ENCODE measurements at regions of chr2 and their contacts with region 1.

Region 1: GRCh38 chr2:43484323-43484930 is 111.4 kb downstream of the THADA start:
- DNase-seq: no peak
- ATAC-seq: peak; percentile 61
- H3K4me3 Mint-ChIP-seq: no peak overlapping the region
- H3K27ac Mint-ChIP-seq: no peak overlapping the region
- H3K4me1 Mint-ChIP-seq: peaks cover 40% of the 10 kb centered on the region
- H3K27me3 Mint-ChIP-seq: no peaks in the 10 kb centered on the region

Region 2: DNA sequence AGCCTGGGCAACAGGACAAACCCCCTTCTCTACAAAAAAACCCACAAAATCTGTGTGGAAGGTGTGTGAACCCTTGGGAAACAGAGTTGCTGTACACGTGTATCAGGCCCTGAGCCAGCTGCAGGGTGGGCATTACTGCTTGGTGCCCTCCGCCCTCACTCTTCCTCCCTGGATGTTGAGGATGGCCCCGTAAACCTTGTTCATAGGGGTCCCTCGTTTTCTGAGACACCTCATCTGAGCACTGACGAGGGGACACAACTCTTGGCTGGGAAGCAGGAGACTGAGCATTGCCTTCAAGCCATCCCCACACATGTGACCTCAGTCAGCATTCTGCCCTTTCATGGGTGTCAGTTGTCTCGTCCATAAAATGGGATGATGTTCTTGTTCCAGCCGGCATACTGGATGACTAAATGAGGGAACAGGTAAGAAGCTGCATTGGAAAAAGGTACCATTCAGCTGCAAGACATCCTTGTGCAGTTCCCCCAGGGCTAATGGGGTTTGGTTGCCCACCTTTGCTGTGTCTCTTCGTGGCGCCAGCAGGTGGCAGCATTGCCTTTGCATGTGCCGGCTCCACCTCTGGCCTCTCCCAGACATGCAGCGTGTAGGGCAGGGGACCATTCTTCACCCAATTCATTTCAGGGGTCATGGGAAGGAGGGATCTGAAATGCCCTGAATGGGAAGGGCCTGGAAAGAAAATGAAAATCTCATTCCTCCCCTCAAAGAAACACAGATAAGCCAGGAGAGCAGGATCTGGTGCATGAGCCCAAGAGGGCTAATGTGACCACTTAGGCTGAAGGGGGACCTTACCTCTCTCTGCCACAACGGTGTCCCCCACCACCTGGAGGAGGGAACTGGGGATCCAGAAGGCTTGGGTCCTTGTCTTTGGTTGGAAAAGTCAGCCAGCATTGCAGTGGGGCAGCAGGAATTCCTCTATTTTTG is 655.7 kb before region 1 on chr2:
- CTCF ChIA-PET with region 1: interaction called, 11 read pairs
- DNase-seq: peak; percentile 77
- ATAC-seq: peak; percentile 95
- H3K4me3 Mint-ChIP-seq: no peak overlapping the region
- H3K27ac Mint-ChIP-seq: no peak overlapping the region
- H3K4me1 Mint-ChIP-seq: peaks cover 16% of the 10 kb centered on the region
- H3K27me3 Mint-ChIP-seq: peaks cover 13% of the 10 kb centered on the region

Region 3: GRCh38 chr2:42944779-42945415 is 539.5 kb before region 1 on chr2:
- CTCF ChIA-PET with region 1: interaction called, 45 read pairs
- DNase-seq: no peak
- ATAC-seq: no peak
- H3K4me3 Mint-ChIP-seq: no peak overlapping the region
- H3K27ac Mint-ChIP-seq: no peak overlapping the region
- H3K4me1 Mint-ChIP-seq: peaks cover 4% of the 10 kb centered on the region
- H3K27me3 Mint-ChIP-seq: peaks cover 2% of the 10 kb centered on the region

Region 4: DNA sequence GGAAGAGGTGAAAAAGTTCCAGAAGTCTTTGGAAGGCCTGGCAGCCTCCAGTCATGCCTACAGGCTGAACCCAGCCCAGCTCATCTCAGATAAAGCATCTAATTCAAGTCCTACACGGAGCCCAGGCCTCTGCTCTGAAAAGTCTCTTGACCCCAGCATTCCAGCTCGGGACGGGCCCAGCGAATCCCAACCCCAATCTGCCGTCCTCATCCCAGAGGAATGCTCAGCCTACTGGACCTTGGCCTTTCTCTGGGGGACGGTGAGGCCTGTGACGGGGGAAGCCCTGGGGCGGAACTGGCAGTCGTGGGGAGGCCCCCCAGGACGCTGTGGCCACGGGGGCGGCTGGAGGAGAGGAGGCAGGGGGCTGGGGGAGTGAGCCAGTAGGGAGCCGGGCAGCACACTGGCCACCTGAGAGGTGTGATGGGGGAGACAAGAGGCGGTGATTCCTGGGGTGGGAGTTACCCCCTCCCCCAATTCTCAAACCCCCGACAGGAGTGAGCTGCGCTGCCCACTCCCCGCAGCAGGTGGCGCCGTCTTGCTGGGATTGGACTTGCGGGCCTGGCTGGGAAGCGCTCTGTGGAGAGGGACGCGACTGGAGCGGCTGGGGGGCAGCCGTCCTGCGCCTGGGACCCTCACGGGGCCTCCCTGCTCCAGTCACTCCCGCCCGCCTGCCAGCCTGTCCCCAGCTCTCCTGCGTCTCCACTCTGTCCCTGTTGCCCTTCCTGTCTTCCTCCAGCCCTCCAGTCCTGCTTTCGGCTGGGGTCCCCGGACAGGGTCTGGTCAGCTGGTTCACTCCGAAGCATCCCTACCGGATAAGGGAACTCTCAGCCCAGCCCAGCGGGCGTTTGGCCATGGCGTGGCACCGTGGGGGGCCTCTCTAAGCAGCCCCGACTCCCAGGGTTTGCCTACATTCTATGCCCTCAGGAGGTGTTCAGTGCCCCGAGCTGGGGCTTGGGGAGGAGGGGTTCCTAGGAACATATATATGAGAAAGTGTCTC is 509.4 kb before region 1 on chr2:
- CTCF ChIA-PET with region 1: interaction called, 12 read pairs
- DNase-seq: peak; percentile 53
- ATAC-seq: no peak
- H3K4me3 Mint-ChIP-seq: no peak overlapping the region
- H3K27ac Mint-ChIP-seq: no peak overlapping the region
- H3K4me1 Mint-ChIP-seq: peaks cover 14% of the 10 kb centered on the region
- H3K27me3 Mint-ChIP-seq: no peaks in the 10 kb centered on the region

Region 5: DNA sequence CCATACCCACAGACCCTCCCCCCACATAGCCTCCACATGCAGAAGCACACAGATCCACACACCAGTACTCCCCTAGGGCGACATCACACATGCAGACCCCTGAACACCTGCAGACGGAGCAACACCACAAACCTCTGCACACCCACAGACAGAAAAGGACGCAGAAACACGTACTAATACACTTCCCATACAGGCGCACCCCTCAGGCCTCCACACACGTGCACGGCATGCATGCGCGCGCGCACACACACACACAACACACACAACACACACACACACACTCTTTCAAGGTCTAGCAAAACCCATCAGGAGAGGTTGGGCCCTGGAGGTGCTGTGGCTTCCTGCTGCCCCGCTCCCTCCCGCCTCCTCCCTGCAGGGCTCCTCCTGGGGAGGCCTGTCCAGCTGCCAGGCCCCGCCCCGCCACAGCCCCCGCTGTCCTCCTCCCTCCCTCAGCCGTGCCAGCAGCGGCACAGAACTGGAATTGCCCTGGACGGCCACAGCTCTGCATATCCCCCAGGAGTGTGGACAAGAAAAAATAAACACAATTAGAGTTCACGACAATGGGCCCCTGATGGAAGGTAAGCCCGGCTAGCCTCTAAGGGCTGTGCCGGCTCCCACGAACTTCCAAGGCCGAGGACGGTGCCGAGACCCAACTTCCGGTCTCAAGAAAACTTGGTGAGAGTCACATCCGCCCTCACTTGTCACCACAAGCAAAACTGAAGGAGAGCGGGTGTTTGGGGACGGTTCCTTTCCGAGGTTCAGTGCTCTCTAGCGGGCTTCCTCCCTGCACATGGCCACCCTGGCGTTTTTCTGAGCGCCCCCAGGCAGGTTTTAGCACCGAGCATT is 264.8 kb before region 1 on chr2:
- CTCF ChIA-PET with region 1: interaction called, 14 read pairs
- DNase-seq: peak; percentile 94
- ATAC-seq: peak; percentile 57
- H3K4me3 Mint-ChIP-seq: peak overlapping the region; percentile 77
- H3K27ac Mint-ChIP-seq: peak overlapping the region; percentile 93
- H3K4me1 Mint-ChIP-seq: peaks cover 46% of the 10 kb centered on the region
- H3K27me3 Mint-ChIP-seq: no peaks in the 10 kb centered on the region